Caco-2 (cell line): ENCODE measurements at regions of chr15 and their contacts with region 1.

Region 1: DNA sequence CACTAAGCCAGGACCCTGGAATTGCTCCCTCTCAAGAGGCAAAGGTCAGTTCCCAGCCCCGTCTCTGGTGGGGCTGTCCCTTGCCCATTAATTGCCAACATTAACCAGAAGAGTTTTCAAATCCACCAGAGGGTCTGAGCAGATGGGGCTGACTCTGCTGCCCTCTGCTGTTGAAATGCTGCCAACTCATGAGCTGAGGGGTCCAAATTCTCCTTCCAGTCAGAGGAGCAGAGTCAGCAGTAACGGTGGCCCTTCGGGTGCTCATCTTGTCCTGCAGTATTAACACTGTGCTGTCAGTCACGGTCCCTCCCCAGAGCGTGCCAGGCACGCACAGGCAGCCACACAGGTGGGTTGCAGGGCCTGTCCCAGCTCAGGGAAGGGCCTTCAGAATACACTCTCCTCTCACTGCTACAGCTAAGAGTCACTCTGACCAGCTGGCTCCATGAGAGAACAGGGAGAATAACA is 10.7 kb upstream of the SPTBN5 start:
- DNase-seq: peak; percentile 56 to 68
- H3K4me3 ChIP-seq: no peak overlapping the region
- H3K4me3 Mint-ChIP-seq: no peak overlapping the region
- H3K27ac Mint-ChIP-seq: no peak overlapping the region
- H3K4me1 ChIP-seq: no peaks in the 10 kb centered on the region
- H3K4me1 Mint-ChIP-seq: no peaks in the 10 kb centered on the region
- H3K27me3 ChIP-seq: no peaks in the 10 kb centered on the region
- H3K27me3 Mint-ChIP-seq: no peaks in the 10 kb centered on the region
- CTCF ChIP-seq: peak; percentile 77 to 85

Region 2: DNA sequence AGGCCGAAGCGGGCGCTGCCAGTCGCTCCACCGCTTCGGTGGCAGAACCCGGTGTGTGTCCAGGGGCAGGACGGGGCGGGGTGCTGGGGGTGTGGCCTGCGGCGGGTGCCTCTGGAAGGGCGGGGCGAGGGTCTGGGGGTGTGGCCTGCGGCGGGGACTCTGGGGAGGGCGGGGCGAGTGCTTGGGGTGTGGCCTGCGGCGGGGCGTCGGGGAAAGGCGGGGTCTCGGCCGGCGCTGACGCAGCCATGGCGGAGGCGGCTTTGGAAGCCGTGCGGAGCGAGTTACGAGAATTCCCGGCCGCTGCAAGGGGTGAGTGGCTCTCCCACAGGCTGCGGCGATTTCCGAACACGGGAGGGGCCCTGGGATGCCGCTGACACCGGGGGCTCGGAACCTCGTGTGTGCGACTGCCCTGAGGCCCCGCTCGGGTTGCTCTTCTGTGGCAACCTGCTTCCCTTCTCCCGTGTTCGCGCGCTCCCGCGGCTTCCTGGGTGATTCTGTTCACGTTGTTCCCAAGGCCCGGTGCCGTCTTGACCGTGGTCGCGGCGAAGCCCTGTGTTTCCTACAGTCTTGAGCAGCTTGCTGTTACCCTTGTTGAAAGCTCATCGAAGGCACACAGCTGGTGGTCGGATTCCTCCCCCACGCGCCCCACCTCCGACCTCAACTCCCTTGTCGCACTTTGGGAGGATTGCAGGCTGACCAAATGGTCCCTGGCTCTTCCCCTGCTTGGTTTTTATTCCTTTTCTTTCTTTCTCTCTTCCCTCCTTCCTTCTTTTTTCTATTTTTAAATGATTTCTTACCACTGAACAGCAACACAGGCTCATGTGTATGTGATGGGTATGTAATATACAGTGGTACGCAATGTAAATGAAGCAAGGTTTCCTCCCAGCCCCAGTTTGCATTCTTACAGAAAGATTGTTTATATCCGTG is 76.4 kb before region 1 on chr15 and contains the start of gene JMJD7:
- CTCF ChIA-PET with region 1: interaction called, 3 read pairs
- POLR2A ChIA-PET with region 1: no interaction called
- intact Hi-C with region 1: loop called (anchors 5 kb)
- DNase-seq: peak; percentile 90 to 93
- H3K4me3 ChIP-seq: peak within 1 kb of the TSS; percentile 86
- H3K4me3 Mint-ChIP-seq: peak within 1 kb of the TSS; percentile 91
- H3K27ac Mint-ChIP-seq: peak within 1 kb of the TSS; percentile 89
- H3K4me1 ChIP-seq: no peaks in the 10 kb centered on the region
- H3K4me1 Mint-ChIP-seq: peaks cover 12% of the 10 kb centered on the region
- H3K27me3 ChIP-seq: no peaks in the 10 kb centered on the region
- H3K27me3 Mint-ChIP-seq: no peaks in the 10 kb centered on the region
- CTCF ChIP-seq: no peak
- total RNA-seq, gene JMJD7: 10.9 and 12.2 TPM in 2 replicates

Region 3: GRCh38 chr15:41866263-41866703 is 38.3 kb before region 1 on chr15:
- CTCF ChIA-PET with region 1: interaction called, 9 read pairs
- POLR2A ChIA-PET with region 1: no interaction called
- intact Hi-C with region 1: loop called (anchors 1 kb)
- DNase-seq: peak; percentile 70 to 83
- H3K4me3 ChIP-seq: no peak overlapping the region
- H3K4me3 Mint-ChIP-seq: no peak overlapping the region
- H3K27ac Mint-ChIP-seq: peak overlapping the region; percentile 50
- H3K4me1 ChIP-seq: peaks cover 21% of the 10 kb centered on the region
- H3K4me1 Mint-ChIP-seq: peaks cover 6% of the 10 kb centered on the region
- H3K27me3 ChIP-seq: no peaks in the 10 kb centered on the region
- H3K27me3 Mint-ChIP-seq: no peaks in the 10 kb centered on the region
- CTCF ChIP-seq: no peak

Region 4: GRCh38 chr15:42359986-42360385 is 455.4 kb after region 1 on chr15:
- CTCF ChIA-PET with region 1: no interaction called
- POLR2A ChIA-PET with region 1: no interaction called
- intact Hi-C with region 1: no loop called
- DNase-seq: no peak
- H3K4me3 ChIP-seq: no peak overlapping the region
- H3K4me3 Mint-ChIP-seq: no peak overlapping the region
- H3K27ac Mint-ChIP-seq: no peak overlapping the region
- H3K4me1 ChIP-seq: no peaks in the 10 kb centered on the region
- H3K4me1 Mint-ChIP-seq: no peaks in the 10 kb centered on the region
- H3K27me3 ChIP-seq: no peaks in the 10 kb centered on the region
- H3K27me3 Mint-ChIP-seq: peaks cover 2% of the 10 kb centered on the region
- CTCF ChIP-seq: no peak